ENCODE measurements at regions of chr9 and their contacts with region 1.

Region 1: DNA sequence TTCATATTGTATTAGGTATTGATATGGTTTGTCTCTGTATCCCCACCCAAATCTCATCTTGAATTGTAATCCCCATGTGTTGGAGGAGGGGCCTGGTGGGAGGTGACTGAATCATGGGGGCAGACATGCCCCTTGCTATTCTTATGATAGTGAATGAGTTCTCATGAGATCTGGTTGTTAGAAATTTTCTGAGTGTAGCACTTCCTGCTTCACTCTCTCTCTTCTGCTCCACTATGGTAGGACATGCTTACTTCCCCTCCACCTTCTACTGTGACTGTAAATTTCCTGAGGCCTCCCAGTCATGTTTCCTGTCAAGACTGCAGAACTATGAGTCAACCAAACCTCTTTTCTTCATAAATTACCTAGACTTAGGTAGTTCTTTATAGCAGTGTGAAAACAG is 187.4 kb upstream of the SLC24A2 start:
- DNase-seq: peak in 8 of 9 donors; percentile 20 to 58 (median 39)
- ATAC-seq: peak; percentile 63
- H3K4me3 ChIP-seq: no peak overlapping the region
- H3K4me3 Mint-ChIP-seq: peak overlapping the region in 7 of 10 donors; percentile 1 to 69 (median 42)
- H3K27ac ChIP-seq: no peak overlapping the region
- H3K27ac Mint-ChIP-seq: peak overlapping the region; percentile 5 to 89 (median 79)
- H3K4me1 ChIP-seq: peaks cover 0 to 14% of the 10 kb centered on the region in 2 donors
- H3K4me1 Mint-ChIP-seq: peaks cover 7 to 30% (median 29%) of the 10 kb centered on the region in 7 donors
- H3K27me3 ChIP-seq: no peaks in the 10 kb centered on the region
- H3K27me3 Mint-ChIP-seq: no peaks in the 10 kb centered on the region

Region 2: GRCh38 chr9:19999491-20000057 is 23.3 kb after region 1 on chr9:
- CTCF ChIA-PET with region 1: no interaction called
- POLR2A ChIA-PET with region 1: no interaction called
- intact Hi-C with region 1: loop called in 1 of 2 experiments (anchors 1 kb)
- DNase-seq: peak in 1 of 9 donors; percentile 61
- ATAC-seq: peak; percentile 37
- H3K4me3 ChIP-seq: no peak overlapping the region
- H3K4me3 Mint-ChIP-seq: peak overlapping the region in 1 of 10 donors; percentile 59
- H3K27ac ChIP-seq: no peak overlapping the region
- H3K27ac Mint-ChIP-seq: peak overlapping the region in 3 of 9 donors; percentile 30 to 93 (median 39)
- H3K4me1 ChIP-seq: peaks cover 0 to 11% of the 10 kb centered on the region in 2 donors
- H3K4me1 Mint-ChIP-seq: peaks cover 0 to 51% (median 8%) of the 10 kb centered on the region in 7 donors
- H3K27me3 ChIP-seq: no peaks in the 10 kb centered on the region
- H3K27me3 Mint-ChIP-seq: no peaks in the 10 kb centered on the region

Region 3: GRCh38 chr9:20015427-20015931 is 39.3 kb after region 1 on chr9:
- CTCF ChIA-PET with region 1: interaction called, 3 read pairs
- POLR2A ChIA-PET with region 1: no interaction called
- intact Hi-C with region 1: loop called (anchors 5 kb)
- DNase-seq: peak in 6 of 9 donors; percentile 5 to 47 (median 29)
- ATAC-seq: peak; percentile 56
- H3K4me3 ChIP-seq: no peak overlapping the region
- H3K4me3 Mint-ChIP-seq: peak overlapping the region in 9 of 10 donors; percentile 7 to 83 (median 42)
- H3K27ac ChIP-seq: peak overlapping the region; percentile 28
- H3K27ac Mint-ChIP-seq: peak overlapping the region; percentile 81 to 98 (median 88)
- H3K4me1 ChIP-seq: peaks cover 6 to 18% of the 10 kb centered on the region in 2 donors
- H3K4me1 Mint-ChIP-seq: peaks cover 19 to 38% (median 32%) of the 10 kb centered on the region in 7 donors
- H3K27me3 ChIP-seq: no peaks in the 10 kb centered on the region
- H3K27me3 Mint-ChIP-seq: no peaks in the 10 kb centered on the region